Vagina (tissue), 2 donors: ENCODE measurements at regions of chr10 and their contacts with region 1.

Region 1: DNA sequence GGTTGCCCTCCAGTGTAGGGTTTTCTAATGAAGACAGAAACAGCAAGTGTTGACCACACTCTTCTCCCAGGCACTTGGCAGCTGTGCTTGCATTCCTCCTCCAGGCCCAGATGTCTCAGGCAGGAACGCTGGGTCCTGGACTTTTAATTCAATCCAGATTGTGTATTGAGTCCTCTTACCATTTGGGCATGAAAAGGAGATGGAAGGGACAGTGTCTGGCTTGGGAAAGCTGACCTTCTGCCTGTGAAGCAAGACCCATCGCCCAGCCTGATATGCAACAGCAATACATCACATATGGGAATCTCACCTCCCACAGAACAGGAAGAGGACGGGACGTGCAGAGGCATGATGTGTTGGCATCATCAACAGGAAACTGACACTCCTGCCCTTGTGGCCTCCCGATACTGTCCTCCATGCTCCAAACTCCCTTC is 174.4 kb upstream of the LYZL2 start:
- DNase-seq: peak in 1 of 2 donors; percentile 98
- H3K4me3 ChIP-seq: no peak overlapping the region
- H3K27ac ChIP-seq: peak overlapping the region; percentile 77
- H3K4me1 ChIP-seq: peaks cover 35% of the 10 kb centered on the region
- H3K27me3 ChIP-seq: no peaks in the 10 kb centered on the region
- CTCF ChIP-seq: no peak
- POLR2A ChIP-seq: no peak

Region 2: DNA sequence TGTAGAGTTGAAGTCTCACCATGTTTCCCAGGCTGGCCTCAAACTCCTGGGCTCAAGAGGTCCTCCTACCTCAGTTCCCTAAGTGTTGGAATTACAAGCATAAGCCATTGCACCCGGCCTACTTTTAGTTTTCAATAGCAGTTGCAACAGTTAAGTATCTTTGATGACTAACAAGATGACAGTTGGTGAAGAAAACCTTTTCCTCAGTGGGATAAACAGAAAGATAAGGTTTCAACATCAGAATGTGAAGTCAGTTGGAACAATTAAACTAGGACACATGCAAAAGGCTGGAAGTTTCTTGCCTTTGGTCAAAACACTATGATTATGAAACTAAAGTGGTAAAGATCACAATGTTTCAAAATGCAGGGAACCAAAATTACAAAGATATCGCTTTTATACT is 58.6 kb after region 1 on chr10:
- intact Hi-C with region 1: loop called (anchors 10 kb)
- DNase-seq: no peak
- H3K4me3 ChIP-seq: no peak overlapping the region
- H3K27ac ChIP-seq: peak overlapping the region; percentile 52
- H3K4me1 ChIP-seq: peaks cover 40% of the 10 kb centered on the region
- H3K27me3 ChIP-seq: no peaks in the 10 kb centered on the region
- CTCF ChIP-seq: no peak
- POLR2A ChIP-seq: no peak